ENCODE measurements at regions of chr12 and their contacts with region 1.

Region 1: GRCh38 chr12:26658991-26659390 is 174.0 kb downstream of the ITPR2 start:
- H3K4me3 Mint-ChIP-seq: no peak overlapping the region
- H3K27ac Mint-ChIP-seq: no peak overlapping the region
- H3K4me1 Mint-ChIP-seq: no peaks in the 10 kb centered on the region
- H3K27me3 Mint-ChIP-seq: no peaks in the 10 kb centered on the region

Region 2: DNA sequence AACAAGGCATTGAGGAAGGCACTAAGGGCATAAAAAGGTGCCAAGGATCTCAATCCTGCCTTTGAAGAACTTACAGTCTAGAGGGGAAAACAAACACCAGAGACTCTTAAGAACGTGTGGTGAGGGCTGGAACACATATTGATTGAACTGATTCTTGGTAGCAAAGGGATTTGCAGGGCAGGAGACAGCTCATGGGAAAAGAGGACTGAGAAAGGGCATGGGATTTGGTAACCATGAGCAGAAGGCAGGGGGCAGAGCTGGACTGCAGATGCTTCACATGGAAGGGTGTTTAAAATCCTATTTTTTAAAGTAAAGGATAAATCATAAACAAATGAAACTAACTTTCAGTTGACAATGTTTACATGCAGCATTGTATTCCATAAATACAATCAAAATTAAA is 29.1 kb before region 1 on chr12:
- intact Hi-C with region 1: loop called (anchors 1 kb)
- H3K4me3 Mint-ChIP-seq: no peak overlapping the region
- H3K27ac Mint-ChIP-seq: no peak overlapping the region
- H3K4me1 Mint-ChIP-seq: no peaks in the 10 kb centered on the region
- H3K27me3 Mint-ChIP-seq: no peaks in the 10 kb centered on the region